B cell (primary cell): ENCODE measurements at regions of chrX and their contacts with region 1.

Region 1: DNA sequence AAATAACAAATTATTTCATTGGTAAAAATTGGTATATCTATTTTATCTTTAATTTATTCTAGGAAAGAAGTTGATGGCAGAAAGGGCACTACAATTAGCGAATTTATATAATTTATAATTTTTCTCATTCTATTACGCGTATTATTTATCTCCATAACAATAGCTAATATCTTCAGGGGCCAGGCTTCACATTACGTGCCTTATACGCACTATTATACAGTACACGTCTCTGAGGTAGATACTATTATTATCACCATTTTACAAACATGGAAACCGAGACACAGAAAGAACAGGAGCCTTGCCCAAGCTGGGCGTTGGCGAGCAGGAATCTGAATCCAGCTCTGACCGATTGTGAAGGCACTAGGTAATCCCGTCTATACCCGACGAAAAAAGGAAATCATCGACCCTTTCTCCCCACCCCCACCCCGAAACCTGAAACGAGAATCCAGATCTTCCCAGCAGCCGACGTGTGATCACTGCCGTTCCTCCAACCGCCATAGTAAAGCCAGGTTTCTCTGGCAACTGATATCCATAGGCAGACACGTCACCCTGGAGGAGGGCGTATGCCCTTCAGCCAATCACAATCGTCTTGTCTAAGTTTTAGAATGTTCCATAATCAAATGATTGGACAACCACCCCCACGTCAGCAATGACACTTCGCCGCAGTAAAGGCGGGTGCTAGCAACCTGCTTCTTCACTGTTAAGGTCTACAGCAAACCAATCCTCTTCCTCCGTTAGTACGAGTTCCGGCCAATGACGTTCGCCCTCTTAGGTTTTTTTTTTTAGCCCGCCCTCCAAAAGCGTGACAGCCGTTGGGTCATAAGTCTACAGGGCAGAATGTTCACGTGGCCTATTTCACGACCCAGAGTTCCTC is at the start of gene MORF4L2:
- DNase-seq: no peak
- ATAC-seq: peak; percentile 80
- H3K4me3 ChIP-seq: peak within 1 kb of the TSS; percentile 79 to 95 (median 82)
- H3K4me3 Mint-ChIP-seq: peak within 1 kb of the TSS; percentile 67
- H3K27ac ChIP-seq: peak within 1 kb of the TSS; percentile 97
- H3K27ac Mint-ChIP-seq: peak within 1 kb of the TSS; percentile 50
- H3K4me1 ChIP-seq: peaks cover 3 to 4% of the 10 kb centered on the region in 2 donors
- H3K4me1 Mint-ChIP-seq: peaks cover 7% of the 10 kb centered on the region
- H3K27me3 ChIP-seq: no peaks in the 10 kb centered on the region
- H3K27me3 Mint-ChIP-seq: no peaks in the 10 kb centered on the region
- CTCF ChIP-seq: no peak
- total RNA-seq, gene MORF4L2: 81.8 and 103 TPM in 2 replicates

Region 2: GRCh38 chrX:103214870-103215424 is 471.5 kb before region 1 on chrX and contains the start of gene BEX4:
- CTCF ChIA-PET with region 1: no interaction called
- POLR2A ChIA-PET with region 1: no interaction called
- intact Hi-C with region 1: loop called (anchors 5 kb)
- DNase-seq: peak; percentile 84
- ATAC-seq: peak; percentile 92
- H3K4me3 ChIP-seq: peak within 1 kb of the TSS; percentile 8 to 75 (median 73)
- H3K4me3 Mint-ChIP-seq: peak within 1 kb of the TSS; percentile 87
- H3K27ac ChIP-seq: peak within 1 kb of the TSS; percentile 81 to 84
- H3K27ac Mint-ChIP-seq: peak within 1 kb of the TSS; percentile 91
- H3K4me1 ChIP-seq: peaks cover 5 to 8% of the 10 kb centered on the region in 2 donors
- H3K4me1 Mint-ChIP-seq: peaks cover 12% of the 10 kb centered on the region
- H3K27me3 ChIP-seq: peaks cover 0 to 3% (median 0%) of the 10 kb centered on the region in 4 experiments
- H3K27me3 Mint-ChIP-seq: no peaks in the 10 kb centered on the region
- CTCF ChIP-seq: no peak
- total RNA-seq, gene BEX4: 17.2 and 19.8 TPM in 2 replicates

Region 3: DNA sequence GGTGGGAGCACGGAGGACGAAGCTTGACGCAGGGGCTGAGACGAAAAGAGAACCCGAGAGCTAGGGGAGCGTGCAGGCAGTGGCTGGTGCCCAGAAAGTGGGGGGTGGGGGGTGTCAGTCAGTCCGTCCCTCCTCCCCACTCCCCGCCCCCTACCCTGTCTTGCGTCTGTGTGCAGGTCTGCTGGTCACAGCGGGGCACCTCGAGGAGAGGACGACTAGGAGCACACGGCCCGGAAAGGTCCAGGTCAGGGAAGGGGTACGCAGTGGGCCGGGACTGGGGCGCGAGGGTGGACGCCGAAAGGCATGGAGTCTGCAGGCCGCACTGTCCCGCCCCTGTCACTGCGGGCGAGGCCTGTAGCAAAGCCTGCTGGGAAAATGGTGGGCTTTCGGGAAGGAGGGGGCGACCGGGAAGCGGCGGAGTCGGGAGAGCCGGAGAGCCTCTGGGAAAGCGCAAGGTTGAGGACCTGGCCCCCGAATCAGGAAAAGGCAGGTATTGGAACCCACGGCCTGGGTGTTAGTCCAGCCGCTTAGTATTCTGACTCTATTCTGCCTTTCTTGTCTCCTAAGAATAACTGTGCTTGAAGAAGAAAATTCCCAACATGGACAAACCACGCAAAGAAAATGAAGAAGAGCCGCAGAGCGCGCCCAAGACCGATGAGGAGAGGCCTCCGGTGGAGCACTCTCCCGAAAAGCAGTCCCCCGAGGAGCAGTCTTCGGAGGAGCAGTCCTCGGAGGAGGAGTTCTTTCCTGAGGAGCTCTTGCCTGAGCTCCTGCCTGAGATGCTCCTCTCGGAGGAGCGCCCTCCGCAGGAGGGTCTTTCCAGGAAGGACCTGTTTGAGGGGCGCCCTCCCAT is 56.9 kb before region 1 on chrX:
- CTCF ChIA-PET with region 1: no interaction called
- POLR2A ChIA-PET with region 1: interaction called, 7 read pairs
- intact Hi-C with region 1: loop called (anchors 1 kb)
- DNase-seq: peak; percentile 47
- ATAC-seq: peak; percentile 46
- H3K4me3 ChIP-seq: peak overlapping the region; percentile 7 to 74 (median 63)
- H3K4me3 Mint-ChIP-seq: peak overlapping the region; percentile 89
- H3K27ac ChIP-seq: peak overlapping the region; percentile 67 to 68
- H3K27ac Mint-ChIP-seq: peak overlapping the region; percentile 89
- H3K4me1 ChIP-seq: peaks cover 3 to 9% of the 10 kb centered on the region in 2 donors
- H3K4me1 Mint-ChIP-seq: peaks cover 13% of the 10 kb centered on the region
- H3K27me3 ChIP-seq: no peaks in the 10 kb centered on the region
- H3K27me3 Mint-ChIP-seq: no peaks in the 10 kb centered on the region
- CTCF ChIP-seq: no peak

Region 4: GRCh38 chrX:103817502-103817901 is 131.1 kb after region 1 on chrX:
- CTCF ChIA-PET with region 1: interaction called, 7 read pairs
- POLR2A ChIA-PET with region 1: no interaction called
- intact Hi-C with region 1: loop called (anchors 1 kb)
- DNase-seq: peak; percentile 64
- ATAC-seq: no peak
- H3K4me3 ChIP-seq: no peak overlapping the region
- H3K4me3 Mint-ChIP-seq: no peak overlapping the region
- H3K27ac ChIP-seq: no peak overlapping the region
- H3K27ac Mint-ChIP-seq: no peak overlapping the region
- H3K4me1 ChIP-seq: no peaks in the 10 kb centered on the region
- H3K4me1 Mint-ChIP-seq: no peaks in the 10 kb centered on the region
- H3K27me3 ChIP-seq: no peaks in the 10 kb centered on the region
- H3K27me3 Mint-ChIP-seq: no peaks in the 10 kb centered on the region
- CTCF ChIP-seq: peak; percentile 70

Region 5: GRCh38 chrX:103918581-103919269 is 232.3 kb after region 1 on chrX:
- CTCF ChIA-PET with region 1: no interaction called
- POLR2A ChIA-PET with region 1: no interaction called
- intact Hi-C with region 1: loop called (anchors 2 kb)
- DNase-seq: peak; percentile 69
- ATAC-seq: peak; percentile 75
- H3K4me3 ChIP-seq: peak overlapping the region in 4 of 5 experiments; percentile 65 to 72 (median 67)
- H3K4me3 Mint-ChIP-seq: peak overlapping the region; percentile 94
- H3K27ac ChIP-seq: peak overlapping the region; percentile 53 to 70
- H3K27ac Mint-ChIP-seq: peak overlapping the region; percentile 91
- H3K4me1 ChIP-seq: peaks cover 0 to 5% of the 10 kb centered on the region in 2 donors
- H3K4me1 Mint-ChIP-seq: peaks cover 12% of the 10 kb centered on the region
- H3K27me3 ChIP-seq: no peaks in the 10 kb centered on the region
- H3K27me3 Mint-ChIP-seq: no peaks in the 10 kb centered on the region
- CTCF ChIP-seq: no peak